ENCODE measurements at regions of chr12 and their contacts with region 1.

Region 1: GRCh38 chr12:356276-356988 is 32.7 kb downstream of the KDM5A start:
- DNase-seq: no peak
- ATAC-seq: no peak
- H3K4me3 ChIP-seq: no peak overlapping the region
- H3K27ac ChIP-seq: no peak overlapping the region
- H3K4me1 ChIP-seq: no peaks in the 10 kb centered on the region
- H3K27me3 ChIP-seq: no peaks in the 10 kb centered on the region
- CTCF ChIP-seq: no peak

Region 2: DNA sequence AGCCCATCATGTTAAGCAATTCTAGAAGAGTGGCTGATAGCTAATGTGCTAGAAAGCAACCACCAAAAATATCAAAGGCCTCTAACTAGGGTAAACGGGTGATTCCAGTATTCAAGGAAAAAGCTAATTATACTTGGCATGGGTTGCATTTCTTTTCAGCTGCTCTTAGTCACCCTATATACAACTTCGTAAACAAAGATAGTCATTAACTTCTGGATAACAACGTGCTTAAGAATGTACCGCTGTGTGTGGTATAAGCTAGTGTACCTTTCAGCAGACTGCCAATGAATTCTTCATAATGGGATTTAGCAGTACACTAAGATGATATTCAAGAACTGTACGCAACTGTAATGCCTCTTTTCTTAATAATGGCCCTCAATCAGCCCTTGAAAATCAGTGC is 51.6 kb before region 1 on chr12:
- intact Hi-C with region 1: loop called (anchors 10 kb)
- DNase-seq: no peak
- ATAC-seq: no peak
- H3K4me3 ChIP-seq: no peak overlapping the region
- H3K27ac ChIP-seq: no peak overlapping the region
- H3K4me1 ChIP-seq: no peaks in the 10 kb centered on the region
- H3K27me3 ChIP-seq: no peaks in the 10 kb centered on the region
- CTCF ChIP-seq: no peak

Region 3: GRCh38 chr12:789852-790563 is 433.6 kb after region 1 on chr12:
- intact Hi-C with region 1: no loop called
- DNase-seq: no peak
- ATAC-seq: peak in 2 of 4 donors; percentile 7 to 16
- H3K4me3 ChIP-seq: no peak overlapping the region
- H3K27ac ChIP-seq: no peak overlapping the region
- H3K4me1 ChIP-seq: peaks cover 57% of the 10 kb centered on the region
- H3K27me3 ChIP-seq: no peaks in the 10 kb centered on the region
- CTCF ChIP-seq: no peak

Measured in psoas muscle (tissue), 8 donors.